CD8-positive, alpha-beta T cell (primary cell): ENCODE measurements at regions of chr15 and their contacts with region 1.

Region 1: DNA sequence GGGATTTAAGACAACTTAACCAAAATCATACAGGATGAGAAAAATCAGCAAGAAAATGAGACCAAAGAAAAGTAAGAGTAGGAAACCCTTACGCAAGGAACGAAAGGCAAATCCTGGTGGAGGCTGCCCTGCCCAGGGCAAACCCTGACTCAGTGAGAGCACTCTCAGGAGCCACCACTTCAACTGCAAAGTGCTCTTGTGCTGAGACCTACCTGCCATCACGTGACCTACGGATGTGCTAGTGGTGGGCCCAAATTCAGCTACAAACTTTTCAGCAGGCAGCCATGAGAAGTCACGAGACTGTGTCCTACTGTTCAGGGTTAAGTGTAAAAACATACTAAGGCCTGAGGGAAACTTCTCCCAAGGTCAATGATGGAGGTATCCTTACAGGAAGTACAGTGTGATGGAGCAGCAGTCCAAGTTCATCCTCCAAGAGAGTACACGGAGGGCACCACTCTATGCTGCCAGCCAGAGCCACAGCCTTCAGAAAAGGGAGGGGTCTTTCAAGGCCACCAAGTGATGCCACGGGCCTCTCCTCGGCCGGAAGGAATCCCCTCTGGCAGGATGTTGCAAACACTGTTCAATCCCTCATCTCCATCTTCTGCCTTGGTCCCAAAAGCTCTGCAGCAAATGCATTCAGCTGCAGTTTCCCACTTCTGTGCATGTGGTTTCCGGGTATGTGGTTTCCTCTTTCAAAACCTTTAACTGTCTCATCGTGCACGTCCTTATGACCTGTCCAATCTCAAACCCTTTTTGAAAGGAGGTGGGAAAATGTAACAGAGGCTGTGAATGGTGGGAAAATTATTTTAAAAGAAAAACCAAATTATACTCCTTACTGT is 9.5 kb downstream of the CHSY1 start:
- DNase-seq: peak; percentile 35 to 93 (median 63)
- ATAC-seq: peak; percentile 88
- H3K4me3 ChIP-seq: peak overlapping the region; percentile 38 to 45
- H3K4me3 Mint-ChIP-seq: peak overlapping the region; percentile 71
- H3K27ac ChIP-seq: peak overlapping the region; percentile 13 to 76
- H3K27ac Mint-ChIP-seq: peak overlapping the region; percentile 91
- H3K4me1 ChIP-seq: peaks cover 85% of the 10 kb centered on the region
- H3K4me1 Mint-ChIP-seq: peaks cover 85% of the 10 kb centered on the region
- H3K27me3 ChIP-seq: no peaks in the 10 kb centered on the region
- H3K27me3 Mint-ChIP-seq: no peaks in the 10 kb centered on the region
- CTCF ChIP-seq: no peak

Region 2: DNA sequence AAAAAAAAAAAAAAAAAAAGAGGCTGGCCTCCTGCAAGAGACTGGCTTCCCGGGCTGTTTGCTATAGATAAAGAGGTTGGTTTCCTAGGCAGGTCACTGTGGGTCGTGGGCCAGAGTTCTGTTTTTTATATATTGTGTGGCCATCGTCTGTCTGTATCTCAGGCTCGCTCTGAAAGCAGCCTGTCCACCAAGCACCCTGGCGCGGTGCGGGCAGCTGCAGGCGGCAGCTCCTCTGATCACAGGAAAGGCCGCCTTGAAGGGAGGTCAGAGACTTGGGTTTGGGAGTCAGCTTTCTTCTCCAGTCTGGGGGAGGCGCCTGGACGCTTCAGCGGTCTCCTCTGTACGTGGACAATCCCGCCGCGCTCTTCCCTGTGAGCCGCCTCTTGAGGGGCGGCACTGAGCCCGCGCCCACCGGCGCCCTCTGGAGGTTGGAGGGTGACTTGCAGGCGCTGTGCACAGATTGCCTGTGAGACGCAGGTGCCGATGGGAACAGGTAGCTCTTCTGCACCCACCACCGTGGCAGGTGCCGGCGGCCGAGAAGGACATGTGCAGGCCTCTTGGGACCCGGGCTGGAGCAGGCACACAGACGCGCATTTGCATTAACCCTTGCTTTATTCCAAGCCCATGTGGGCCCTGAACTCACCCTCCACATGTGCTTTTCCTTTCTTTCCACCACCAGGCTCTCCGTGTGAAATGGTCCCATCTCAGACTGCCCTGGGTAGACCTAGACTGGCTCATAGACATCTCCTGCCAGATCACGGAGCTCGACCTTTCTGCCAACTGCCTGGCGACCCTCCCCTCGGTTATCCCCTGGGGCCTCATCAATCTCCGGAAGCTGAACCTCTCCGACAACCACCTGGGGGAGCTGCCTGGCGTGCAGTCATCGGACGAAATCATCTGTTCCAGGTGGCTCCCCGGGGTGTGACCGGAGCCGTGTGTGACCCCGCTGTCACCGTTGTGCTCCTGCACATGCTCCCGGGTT is 233.9 kb before region 1 on chr15:
- CTCF ChIA-PET with region 1: interaction called, 12 read pairs
- POLR2A ChIA-PET with region 1: no interaction called
- intact Hi-C with region 1: no loop called
- DNase-seq: peak; percentile 74 to 92 (median 86)
- ATAC-seq: peak; percentile 98
- H3K4me3 ChIP-seq: peak overlapping the region; percentile 73 to 81
- H3K4me3 Mint-ChIP-seq: peak overlapping the region; percentile 88
- H3K27ac ChIP-seq: no peak overlapping the region
- H3K27ac Mint-ChIP-seq: peak overlapping the region; percentile 60
- H3K4me1 ChIP-seq: peaks cover 13% of the 10 kb centered on the region
- H3K4me1 Mint-ChIP-seq: peaks cover 19% of the 10 kb centered on the region
- H3K27me3 ChIP-seq: peaks cover 0 to 3% of the 10 kb centered on the region in 2 experiments
- H3K27me3 Mint-ChIP-seq: no peaks in the 10 kb centered on the region
- CTCF ChIP-seq: peak; percentile 96

Region 3: DNA sequence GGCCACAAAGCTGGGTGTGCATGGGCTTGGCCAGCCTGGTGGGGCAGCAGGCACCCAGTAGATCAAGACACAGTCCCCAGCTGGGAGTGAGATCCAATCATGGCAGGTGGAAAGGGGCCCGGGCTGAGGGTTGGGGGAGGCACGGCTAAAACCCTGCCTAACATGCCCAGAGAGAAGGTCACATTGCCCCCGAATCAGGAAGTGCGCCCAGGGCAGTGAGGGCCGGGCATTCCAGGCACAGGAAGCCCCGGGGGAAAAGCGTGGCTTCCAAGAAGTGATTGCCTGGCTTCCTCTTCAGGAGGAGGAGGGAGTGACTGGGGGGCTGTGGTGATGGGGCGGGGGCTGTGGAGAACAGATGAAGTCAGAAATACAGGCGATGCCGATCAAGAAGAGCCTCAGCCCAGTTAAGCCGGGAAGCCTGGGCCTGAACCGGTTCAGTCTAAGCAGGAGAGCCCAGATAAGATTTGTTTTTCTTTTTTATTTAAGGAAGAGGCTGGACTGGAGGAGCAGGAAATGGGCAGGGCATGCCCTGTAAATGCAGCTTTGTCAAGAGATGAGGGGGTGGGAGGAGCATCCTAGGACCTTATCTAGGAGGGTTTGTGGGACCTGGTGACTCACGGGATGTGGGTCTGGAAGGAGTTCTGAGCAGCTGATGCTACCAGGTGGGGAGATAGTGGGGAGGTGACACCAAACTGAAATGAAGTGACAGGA is 74.5 kb before region 1 on chr15:
- CTCF ChIA-PET with region 1: no interaction called
- POLR2A ChIA-PET with region 1: no interaction called
- intact Hi-C with region 1: loop called in 1 of 2 experiments (anchors 5 kb)
- DNase-seq: peak in 8 of 9 experiments; percentile 38 to 72 (median 58)
- ATAC-seq: peak; percentile 95
- H3K4me3 ChIP-seq: no peak overlapping the region
- H3K4me3 Mint-ChIP-seq: peak overlapping the region; percentile 47
- H3K27ac ChIP-seq: no peak overlapping the region
- H3K27ac Mint-ChIP-seq: peak overlapping the region; percentile 49
- H3K4me1 ChIP-seq: peaks cover 16% of the 10 kb centered on the region
- H3K4me1 Mint-ChIP-seq: peaks cover 17% of the 10 kb centered on the region
- H3K27me3 ChIP-seq: no peaks in the 10 kb centered on the region
- H3K27me3 Mint-ChIP-seq: no peaks in the 10 kb centered on the region
- CTCF ChIP-seq: no peak

Region 4: GRCh38 chr15:101187820-101188636 is 54.4 kb before region 1 on chr15:
- CTCF ChIA-PET with region 1: no interaction called
- POLR2A ChIA-PET with region 1: no interaction called
- intact Hi-C with region 1: no loop called
- DNase-seq: no peak
- ATAC-seq: no peak
- H3K4me3 ChIP-seq: no peak overlapping the region
- H3K4me3 Mint-ChIP-seq: no peak overlapping the region
- H3K27ac ChIP-seq: no peak overlapping the region
- H3K27ac Mint-ChIP-seq: peak overlapping the region; percentile 0
- H3K4me1 ChIP-seq: peaks cover 2% of the 10 kb centered on the region
- H3K4me1 Mint-ChIP-seq: peaks cover 45% of the 10 kb centered on the region
- H3K27me3 ChIP-seq: no peaks in the 10 kb centered on the region
- H3K27me3 Mint-ChIP-seq: no peaks in the 10 kb centered on the region
- CTCF ChIP-seq: no peak

Region 5: DNA sequence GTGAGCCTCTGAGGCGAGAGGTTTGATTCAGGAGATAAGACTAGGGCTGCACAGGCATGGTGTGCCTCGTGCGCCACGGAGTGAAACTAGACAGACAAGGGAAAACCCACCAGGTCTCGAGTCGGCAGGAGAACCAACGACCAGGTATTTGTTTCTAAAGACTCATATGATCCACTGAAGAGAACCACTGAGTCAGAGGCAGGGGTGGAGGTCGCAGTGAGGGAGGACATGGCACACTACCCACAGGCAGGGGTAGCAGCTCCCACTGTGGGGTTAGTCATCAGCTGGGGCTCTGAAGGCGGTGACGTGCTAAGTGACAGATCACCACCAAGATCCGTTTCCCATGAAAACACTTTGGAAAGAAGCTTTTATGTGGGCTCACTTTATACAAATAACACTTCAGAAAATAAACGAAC is 36.2 kb before region 1 on chr15:
- CTCF ChIA-PET with region 1: interaction called, 4 read pairs
- POLR2A ChIA-PET with region 1: no interaction called
- intact Hi-C with region 1: loop called in 1 of 2 experiments (anchors 5 kb)
- DNase-seq: peak in 7 of 9 experiments; percentile 32 to 80 (median 62)
- ATAC-seq: peak; percentile 95
- H3K4me3 ChIP-seq: peak overlapping the region in 1 of 2 experiments; percentile 4
- H3K4me3 Mint-ChIP-seq: peak overlapping the region; percentile 66
- H3K27ac ChIP-seq: no peak overlapping the region
- H3K27ac Mint-ChIP-seq: peak overlapping the region; percentile 62
- H3K4me1 ChIP-seq: peaks cover 38% of the 10 kb centered on the region
- H3K4me1 Mint-ChIP-seq: peaks cover 75% of the 10 kb centered on the region
- H3K27me3 ChIP-seq: no peaks in the 10 kb centered on the region
- H3K27me3 Mint-ChIP-seq: no peaks in the 10 kb centered on the region
- CTCF ChIP-seq: no peak

Region 6: GRCh38 chr15:101288908-101289513 is 46.6 kb after region 1 on chr15:
- CTCF ChIA-PET with region 1: interaction called, 10 read pairs
- POLR2A ChIA-PET with region 1: interaction called, 7 read pairs
- intact Hi-C with region 1: loop called in 1 of 2 experiments (anchors 2 kb)
- DNase-seq: peak in 3 of 9 experiments; percentile 29 to 76 (median 66)
- ATAC-seq: peak; percentile 76
- H3K4me3 ChIP-seq: no peak overlapping the region
- H3K4me3 Mint-ChIP-seq: no peak overlapping the region
- H3K27ac ChIP-seq: no peak overlapping the region
- H3K27ac Mint-ChIP-seq: peak overlapping the region; percentile 30
- H3K4me1 ChIP-seq: peaks cover 36% of the 10 kb centered on the region
- H3K4me1 Mint-ChIP-seq: peaks cover 48% of the 10 kb centered on the region
- H3K27me3 ChIP-seq: no peaks in the 10 kb centered on the region
- H3K27me3 Mint-ChIP-seq: no peaks in the 10 kb centered on the region
- CTCF ChIP-seq: peak; percentile 75

Region 7: DNA sequence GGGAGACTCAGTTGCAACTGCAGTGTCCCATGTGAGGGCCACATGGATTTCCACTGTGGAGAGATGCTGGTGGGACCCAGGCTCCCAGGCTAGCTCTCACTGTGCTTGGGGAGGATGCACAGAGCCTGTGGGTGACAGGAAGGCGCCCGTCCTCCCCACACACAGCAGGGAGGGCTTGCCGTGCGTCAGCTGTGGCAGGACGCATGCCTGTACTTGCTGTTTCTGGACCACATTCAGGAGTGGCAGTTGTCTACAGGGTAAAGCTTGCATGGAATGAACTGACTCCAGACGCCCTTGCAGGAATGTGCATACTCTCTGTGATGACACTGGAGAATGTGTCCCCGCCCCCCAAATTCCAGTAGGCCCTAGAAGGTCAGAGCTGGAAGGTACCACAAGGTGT is 116.5 kb after region 1 on chr15:
- CTCF ChIA-PET with region 1: no interaction called
- POLR2A ChIA-PET with region 1: no interaction called
- intact Hi-C with region 1: no loop called
- DNase-seq: no peak
- ATAC-seq: no peak
- H3K4me3 ChIP-seq: no peak overlapping the region
- H3K4me3 Mint-ChIP-seq: no peak overlapping the region
- H3K27ac ChIP-seq: no peak overlapping the region
- H3K27ac Mint-ChIP-seq: no peak overlapping the region
- H3K4me1 ChIP-seq: no peaks in the 10 kb centered on the region
- H3K4me1 Mint-ChIP-seq: peaks cover 5% of the 10 kb centered on the region
- H3K27me3 ChIP-seq: peaks cover 0 to 2% of the 10 kb centered on the region in 2 experiments
- H3K27me3 Mint-ChIP-seq: peaks cover 9% of the 10 kb centered on the region
- CTCF ChIP-seq: no peak